Activated CD4-positive, alpha-beta T cell treated with anti-CD3 and anti-CD28 coated beads, Interleukin-2, amount 10 ng/mL, durations not matched to agents 7 days and 5 days (primary cell): ENCODE measurements at regions of chrX and their contacts with region 1.

Region 1: DNA sequence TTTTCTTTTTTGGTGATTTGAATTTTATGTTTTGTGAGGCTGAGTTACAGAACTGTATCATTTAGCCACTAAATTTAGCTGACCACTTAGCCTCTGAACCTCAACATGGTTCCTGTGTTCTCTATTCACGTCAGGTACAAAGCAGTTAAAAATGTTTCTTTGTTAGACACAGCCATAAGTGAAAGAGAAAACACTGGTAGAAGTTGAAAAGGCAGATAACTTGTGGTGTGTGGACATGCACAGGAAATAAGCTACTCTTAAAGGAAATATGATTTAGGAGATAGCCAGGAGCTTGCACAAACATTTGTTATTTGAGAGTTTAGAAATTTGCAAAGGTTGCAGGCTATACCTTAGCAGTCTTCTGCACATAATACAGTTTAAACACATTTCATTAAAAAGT is 171.0 kb upstream of the RPS6KA3 start:
- DNase-seq: peak; percentile 20
- H3K4me3 Mint-ChIP-seq: peak overlapping the region; percentile 54
- H3K27ac Mint-ChIP-seq: peak overlapping the region; percentile 97
- H3K4me1 Mint-ChIP-seq: peaks cover 68% of the 10 kb centered on the region
- H3K27me3 Mint-ChIP-seq: no peaks in the 10 kb centered on the region

Region 2: DNA sequence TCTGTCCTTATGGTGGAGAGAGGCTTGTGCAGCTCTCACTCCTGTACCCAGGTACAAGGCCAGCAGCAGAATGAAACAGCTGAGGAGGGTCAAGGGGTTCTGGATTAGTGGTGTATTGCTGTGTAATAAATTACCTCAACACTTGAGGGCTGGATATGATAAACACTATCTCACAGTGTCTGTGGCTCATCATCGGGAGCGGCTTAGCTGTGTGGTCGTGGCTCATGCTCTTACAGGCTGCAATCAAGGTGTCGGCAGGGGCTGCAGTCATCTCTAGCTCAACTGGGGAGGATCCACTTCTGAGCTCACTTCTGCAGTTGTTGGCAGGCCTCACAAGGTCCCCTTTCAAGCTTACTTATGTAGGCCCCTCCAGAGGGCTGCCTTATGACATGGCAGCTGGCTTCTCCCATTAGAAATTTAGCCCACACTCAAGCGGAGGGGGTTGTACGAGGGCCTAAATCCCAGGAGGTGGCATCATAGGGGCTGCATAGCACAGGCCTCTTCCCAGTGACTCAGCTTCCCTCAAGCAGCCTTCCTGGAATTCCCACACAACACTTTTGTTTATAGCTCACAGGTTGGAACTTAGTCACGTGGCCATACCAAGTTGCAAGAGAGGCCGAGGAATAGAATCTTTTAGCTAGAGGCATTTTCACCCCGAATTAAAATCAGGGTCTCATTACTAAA is 22.8 kb before region 1 on chrX:
- CTCF ChIA-PET with region 1: interaction called, 19 read pairs
- POLR2A ChIA-PET with region 1: no interaction called
- DNase-seq: no peak
- H3K4me3 Mint-ChIP-seq: no peak overlapping the region
- H3K27ac Mint-ChIP-seq: peak overlapping the region; percentile 94
- H3K4me1 Mint-ChIP-seq: peaks cover 40% of the 10 kb centered on the region
- H3K27me3 Mint-ChIP-seq: no peaks in the 10 kb centered on the region

Region 3: GRCh38 chrX:20452487-20452886 is 14.8 kb after region 1 on chrX:
- CTCF ChIA-PET with region 1: no interaction called
- POLR2A ChIA-PET with region 1: no interaction called
- DNase-seq: no peak
- H3K4me3 Mint-ChIP-seq: peak overlapping the region; percentile 41
- H3K27ac Mint-ChIP-seq: peak overlapping the region; percentile 95
- H3K4me1 Mint-ChIP-seq: peaks cover 46% of the 10 kb centered on the region
- H3K27me3 Mint-ChIP-seq: peaks cover 2% of the 10 kb centered on the region